Pancreas (tissue), 10 donors: ENCODE measurements at regions of chr1 and their contacts with region 1.

Region 1: GRCh38 chr1:180881806-180882509 is 30.7 kb upstream of the KIAA1614 start:
- DNase-seq: no peak
- ATAC-seq: peak; percentile 48 to 82 (median 76)
- H3K4me3 ChIP-seq: no peak overlapping the region
- H3K27ac ChIP-seq: no peak overlapping the region
- H3K4me1 ChIP-seq: no peaks in the 10 kb centered on the region
- H3K27me3 ChIP-seq: no peaks in the 10 kb centered on the region
- CTCF ChIP-seq: peak in 1 of 4 donors; percentile 20

Region 2: DNA sequence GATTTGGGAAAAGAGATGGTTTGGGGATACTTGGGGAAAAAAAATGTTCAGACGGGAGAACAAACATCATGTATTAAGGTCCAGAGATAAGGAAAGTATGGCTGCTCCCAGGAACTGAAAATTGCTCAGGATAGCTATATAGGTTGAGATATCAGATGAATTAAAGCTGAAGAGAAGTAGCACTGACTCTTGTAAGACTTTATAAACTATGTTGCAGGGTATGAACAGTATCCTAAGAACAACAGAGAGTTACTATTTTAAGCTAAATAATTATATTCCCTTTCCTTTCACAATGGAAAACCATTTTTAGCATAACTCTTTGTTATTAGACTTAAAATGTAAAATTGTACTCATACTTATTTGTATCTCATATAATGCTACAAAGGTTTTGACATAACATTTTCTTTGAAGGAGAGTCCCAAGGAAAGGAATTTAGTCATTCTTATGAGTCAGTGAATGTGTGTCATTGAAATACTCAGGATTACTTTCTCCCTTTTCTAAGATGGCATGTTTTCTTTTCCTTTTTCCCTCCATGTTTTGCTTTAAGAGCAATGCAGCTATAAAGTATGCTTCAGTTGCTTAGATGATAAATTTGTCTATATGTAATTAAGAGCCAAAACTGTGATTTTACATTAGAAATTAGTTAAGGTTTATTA is 108.6 kb before region 1 on chr1:
- intact Hi-C with region 1: no loop called
- DNase-seq: no peak
- ATAC-seq: no peak
- H3K4me3 ChIP-seq: no peak overlapping the region
- H3K27ac ChIP-seq: no peak overlapping the region
- H3K4me1 ChIP-seq: peaks cover 4 to 16% (median 12%) of the 10 kb centered on the region in 3 donors
- H3K27me3 ChIP-seq: no peaks in the 10 kb centered on the region
- CTCF ChIP-seq: no peak

Region 3: DNA sequence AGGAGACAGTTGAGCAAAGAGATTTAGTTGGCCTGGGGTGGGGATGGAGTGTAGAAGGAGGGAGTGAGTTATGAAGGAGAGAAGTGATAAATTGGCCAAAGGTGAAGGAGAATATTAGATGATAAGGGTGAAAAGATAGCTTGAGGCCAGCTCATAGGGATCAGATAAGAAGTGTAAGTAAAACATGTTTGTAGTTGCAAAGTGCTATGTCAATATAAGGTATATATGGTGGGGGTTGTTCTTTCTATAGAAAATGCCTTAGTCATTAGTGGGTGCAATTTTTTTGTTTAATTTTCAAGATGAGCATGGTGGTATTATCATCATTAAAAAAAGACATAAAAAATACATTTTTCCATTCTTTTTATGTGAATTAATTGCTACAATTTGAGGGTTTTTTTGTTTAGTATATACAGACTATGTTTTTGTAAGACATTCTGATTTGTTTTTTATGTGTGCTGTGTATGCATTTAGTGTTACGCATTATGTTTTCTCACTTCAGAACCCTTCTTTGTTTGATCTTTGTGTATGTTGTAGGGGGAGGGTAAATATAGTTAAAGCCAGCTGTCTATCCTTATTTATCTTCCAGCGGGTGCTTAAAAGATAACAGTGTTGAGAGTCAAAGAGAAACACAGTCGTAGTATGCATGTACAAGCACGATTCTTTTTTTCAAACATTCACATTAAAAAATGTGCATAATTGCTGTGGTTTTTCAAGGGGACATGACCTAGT is 66.9 kb before region 1 on chr1:
- intact Hi-C with region 1: no loop called
- DNase-seq: no peak
- ATAC-seq: peak in 2 of 4 donors; percentile 32 to 65
- H3K4me3 ChIP-seq: no peak overlapping the region
- H3K27ac ChIP-seq: no peak overlapping the region
- H3K4me1 ChIP-seq: peaks cover 0 to 3% (median 0%) of the 10 kb centered on the region in 3 donors
- H3K27me3 ChIP-seq: no peaks in the 10 kb centered on the region
- CTCF ChIP-seq: no peak

Region 4: DNA sequence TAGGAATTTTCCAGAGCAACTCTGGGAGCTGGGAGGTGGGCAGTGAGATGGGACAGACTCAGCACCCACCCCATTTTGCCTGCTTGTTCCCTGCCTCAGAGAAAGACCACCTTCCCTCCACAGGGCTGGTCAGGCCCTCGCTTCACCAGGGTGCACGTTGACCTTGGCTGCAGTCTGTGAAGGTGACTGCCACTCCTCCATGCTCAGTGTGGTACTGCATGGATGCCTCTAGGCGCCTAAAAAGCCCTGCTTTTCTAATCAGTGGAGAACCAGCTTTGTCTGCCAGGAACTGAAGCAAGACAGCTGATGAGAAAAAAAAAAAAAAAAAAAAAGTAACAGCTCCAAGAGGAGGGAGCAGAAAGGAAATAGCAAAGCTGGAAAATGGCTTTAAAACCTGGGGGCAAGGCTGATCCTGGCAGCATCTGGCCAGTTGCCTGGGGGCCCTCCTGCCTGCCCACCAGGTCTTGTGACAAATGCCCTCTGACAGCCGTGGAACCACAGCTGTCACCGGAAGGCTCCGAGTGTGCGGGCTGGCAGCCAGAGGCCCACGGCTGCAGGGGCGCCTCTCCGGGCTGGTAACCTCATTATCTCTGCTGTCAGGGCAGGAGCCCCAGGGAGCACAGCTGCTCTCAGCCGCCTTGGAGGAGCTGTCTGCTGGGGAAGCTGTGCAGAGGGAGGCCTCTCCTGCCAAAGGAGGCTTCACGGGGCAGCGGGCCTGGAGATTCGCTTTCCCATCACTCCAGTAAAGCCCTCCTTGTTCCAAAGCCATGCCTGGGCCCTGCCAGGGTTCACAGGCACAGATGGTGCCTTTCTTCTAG is 44.4 kb after region 1 on chr1:
- intact Hi-C with region 1: loop called in 1 of 3 experiments (anchors 10 kb)
- DNase-seq: peak in 3 of 6 donors; percentile 12 to 75 (median 20)
- ATAC-seq: peak in 3 of 4 donors; percentile 56 to 74 (median 71)
- H3K4me3 ChIP-seq: no peak overlapping the region
- H3K27ac ChIP-seq: peak overlapping the region in 2 of 4 donors; percentile 8 to 22
- H3K4me1 ChIP-seq: no peaks in the 10 kb centered on the region
- H3K27me3 ChIP-seq: no peaks in the 10 kb centered on the region
- CTCF ChIP-seq: no peak

Region 5: DNA sequence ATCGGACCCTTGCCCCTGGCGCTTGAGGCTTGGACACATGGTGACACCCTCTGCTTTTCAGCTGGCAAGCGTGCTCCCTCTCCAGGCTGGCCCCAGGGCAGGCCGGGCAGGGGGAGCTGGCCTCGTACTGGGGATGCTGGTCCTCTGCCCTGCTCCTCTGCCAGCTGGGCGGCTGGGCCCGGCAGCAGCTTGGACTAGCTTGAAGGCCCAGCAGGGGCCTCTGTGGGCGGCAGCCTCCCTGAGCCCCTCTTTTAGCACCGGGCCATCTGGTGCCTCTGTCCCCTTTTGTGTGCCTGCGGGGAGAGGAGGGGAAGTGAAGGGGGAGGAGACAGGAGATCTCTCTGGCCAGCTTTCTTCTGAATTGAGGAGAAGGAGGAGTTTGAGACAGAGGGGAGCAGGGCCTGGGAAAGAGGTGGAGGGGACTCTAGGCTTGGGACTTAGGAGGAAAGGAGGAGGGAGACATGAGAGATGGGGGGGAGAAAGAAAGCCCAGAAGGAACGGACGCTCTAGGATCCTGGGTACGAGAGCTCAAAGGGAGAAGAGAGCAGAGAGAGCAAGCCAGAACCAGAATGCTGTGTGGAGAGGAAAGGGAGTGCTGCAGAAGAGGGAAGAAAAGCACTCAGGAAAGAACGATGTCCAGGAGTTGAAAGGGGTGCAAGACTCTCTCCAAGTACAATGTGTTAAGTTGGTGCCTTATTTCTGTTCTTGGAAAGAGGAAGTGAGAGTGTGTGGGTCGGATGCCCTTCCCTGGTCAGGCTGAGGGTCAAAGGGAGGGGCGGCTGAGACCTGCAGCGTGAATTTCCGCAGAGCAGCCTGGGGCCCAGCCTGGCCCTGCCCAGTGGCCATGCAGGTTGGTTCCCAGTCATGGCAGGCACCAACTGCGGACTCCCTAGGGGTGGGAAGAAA is 246.9 kb after region 1 on chr1:
- intact Hi-C with region 1: loop called in 1 of 3 experiments (anchors 10 kb)
- DNase-seq: peak in 1 of 6 donors; percentile 45
- ATAC-seq: peak in 2 of 4 donors; percentile 51 to 63
- H3K4me3 ChIP-seq: no peak overlapping the region
- H3K27ac ChIP-seq: peak overlapping the region in 1 of 4 donors; percentile 36
- H3K4me1 ChIP-seq: no peaks in the 10 kb centered on the region
- H3K27me3 ChIP-seq: no peaks in the 10 kb centered on the region
- CTCF ChIP-seq: no peak

Region 6: DNA sequence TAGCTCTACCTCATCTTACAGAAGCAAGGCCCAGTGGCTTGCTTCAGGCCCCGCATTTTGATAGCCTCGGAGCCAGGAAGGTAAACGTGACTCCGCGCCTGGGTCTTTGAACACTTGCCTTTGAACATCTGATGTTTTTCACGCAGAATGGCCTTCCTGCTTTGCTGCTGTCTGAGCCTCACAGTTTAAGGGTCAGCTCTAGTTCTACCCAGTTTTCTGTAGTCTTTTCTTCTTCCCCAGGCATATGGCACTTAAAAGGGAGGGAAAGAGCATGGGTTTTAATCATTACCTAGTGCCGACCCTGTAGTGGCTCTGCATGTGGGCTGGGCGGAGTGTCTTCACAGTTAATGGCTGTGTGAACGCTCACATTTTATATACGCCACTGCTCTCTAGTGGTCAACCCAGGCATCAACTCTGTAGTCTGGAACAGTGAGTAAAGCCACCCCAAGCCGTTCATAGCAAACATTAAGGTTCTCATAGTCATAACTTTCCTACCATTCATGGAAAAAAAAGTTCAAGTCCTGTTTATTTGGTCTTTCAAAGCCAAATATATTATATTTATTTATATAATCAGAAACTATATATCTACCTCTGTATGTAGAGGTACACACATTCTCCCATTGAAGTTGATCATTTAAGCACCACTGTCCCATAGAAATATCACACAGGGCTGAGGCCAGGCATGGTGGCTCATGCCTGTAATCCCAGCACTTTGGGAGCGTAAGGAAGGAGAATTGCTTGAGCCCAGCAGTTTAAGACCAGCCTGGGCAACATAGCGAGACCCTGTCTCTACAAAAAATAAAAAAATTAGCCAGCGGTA is 284.6 kb after region 1 on chr1:
- intact Hi-C with region 1: loop called in 1 of 3 experiments (anchors 5 kb)
- DNase-seq: peak in 5 of 6 donors; percentile 50 to 76 (median 56)
- ATAC-seq: peak; percentile 98 to 100 (median 100)
- H3K4me3 ChIP-seq: no peak overlapping the region
- H3K27ac ChIP-seq: no peak overlapping the region
- H3K4me1 ChIP-seq: no peaks in the 10 kb centered on the region
- H3K27me3 ChIP-seq: no peaks in the 10 kb centered on the region
- CTCF ChIP-seq: peak; percentile 69 to 82 (median 80)

Region 7: GRCh38 chr1:181216591-181216994 is 334.6 kb after region 1 on chr1:
- intact Hi-C with region 1: no loop called
- DNase-seq: no peak
- ATAC-seq: no peak
- H3K4me3 ChIP-seq: no peak overlapping the region
- H3K27ac ChIP-seq: no peak overlapping the region
- H3K4me1 ChIP-seq: no peaks in the 10 kb centered on the region
- H3K27me3 ChIP-seq: no peaks in the 10 kb centered on the region
- CTCF ChIP-seq: no peak